Vagina (tissue), 2 donors: ENCODE measurements at regions of chr1 and their contacts with region 1.

Region 1: DNA sequence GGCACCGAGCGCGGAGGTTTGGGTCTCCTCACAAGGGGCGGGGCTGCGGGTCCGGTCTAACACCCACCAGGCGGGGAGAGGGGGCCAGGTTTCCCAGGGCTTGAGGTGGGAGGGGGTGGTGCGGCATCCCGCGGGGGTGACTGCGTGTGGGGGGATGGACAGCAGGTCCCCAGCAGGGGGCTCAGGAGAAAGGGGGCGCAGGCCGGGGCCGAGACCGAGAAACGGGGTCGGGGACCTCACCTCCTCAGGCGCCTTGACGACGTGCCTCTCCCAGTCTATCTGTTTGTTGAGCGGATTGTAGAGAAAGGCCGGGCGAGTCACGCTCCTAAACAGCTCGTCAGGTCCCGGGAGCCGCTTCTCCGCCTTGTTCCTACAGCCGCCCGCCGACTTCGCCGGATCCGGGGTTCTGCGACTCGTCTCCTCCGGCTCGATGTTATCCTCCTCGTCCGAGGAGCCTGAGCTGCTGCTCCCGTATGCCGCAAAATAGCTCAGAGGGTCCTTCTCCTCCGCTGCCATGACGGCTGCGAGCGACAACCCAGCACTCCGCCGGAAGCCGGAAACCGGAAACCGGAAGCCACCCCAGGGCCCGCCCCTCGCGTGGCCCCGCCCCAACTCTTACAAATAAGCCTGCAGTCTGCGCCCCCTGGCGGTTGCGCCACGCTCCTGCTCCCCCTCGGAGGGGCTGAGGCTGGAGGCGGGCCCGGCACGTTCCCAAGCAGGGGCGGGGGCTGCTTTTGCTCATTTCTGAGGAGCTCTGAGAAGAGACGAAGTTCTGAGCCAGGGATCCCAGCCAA is at the start of gene C1orf52:
- DNase-seq: no peak
- H3K4me3 ChIP-seq: peak within 1 kb of the TSS; percentile 83 to 97
- H3K27ac ChIP-seq: peak within 1 kb of the TSS; percentile 69
- H3K4me1 ChIP-seq: peaks cover 22% of the 10 kb centered on the region
- H3K27me3 ChIP-seq: no peaks in the 10 kb centered on the region
- CTCF ChIP-seq: peak; percentile 97 to 100 (median 98)
- POLR2A ChIP-seq: peak in 1 of 2 donors; percentile 57
- total RNA-seq, gene C1orf52: 13.0 TPM

Region 2: GRCh38 chr1:84506002-84506728 is 753.1 kb before region 1 on chr1 and contains the starts of genes GNG5 and SPATA1:
- intact Hi-C with region 1: loop called (anchors 10 kb)
- DNase-seq: peak; percentile 97
- H3K4me3 ChIP-seq: peak within 1 kb of the TSS; percentile 62 to 90
- H3K27ac ChIP-seq: peak within 1 kb of the TSS; percentile 95
- H3K4me1 ChIP-seq: peaks cover 37% of the 10 kb centered on the region
- H3K27me3 ChIP-seq: no peaks in the 10 kb centered on the region
- CTCF ChIP-seq: no peak
- POLR2A ChIP-seq: peak in 1 of 2 donors; percentile 63
- total RNA-seq, gene GNG5: 95.3 TPM
- total RNA-seq, gene SPATA1: 0.25 TPM

Region 3: DNA sequence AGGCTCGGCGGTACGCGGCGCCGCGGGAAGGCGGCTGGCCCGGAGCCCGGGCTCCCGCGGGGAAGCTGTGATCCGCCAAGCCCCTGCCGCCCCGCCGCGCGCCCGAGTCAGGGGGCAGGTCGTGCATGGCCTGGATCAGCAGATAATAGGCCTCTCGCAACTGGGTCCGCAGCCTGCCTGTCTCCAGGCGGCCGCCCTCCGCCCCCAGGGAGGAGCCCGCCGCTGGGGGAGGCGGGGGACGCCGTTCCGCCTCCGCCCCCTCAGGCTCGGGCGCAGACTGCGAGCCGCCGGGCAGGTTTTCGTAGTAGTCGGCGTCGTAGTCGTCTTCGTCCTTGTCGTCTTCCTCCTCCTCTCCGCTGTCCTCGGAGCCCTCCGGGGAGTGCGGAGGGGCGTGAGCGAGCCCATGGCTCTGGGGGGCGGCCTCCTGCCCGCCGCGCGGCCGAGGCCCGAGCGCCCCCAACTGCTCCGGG is 58.4 kb before region 1 on chr1 and contains the start of gene SYDE2:
- intact Hi-C with region 1: loop called (anchors 5 kb)
- DNase-seq: no peak
- H3K4me3 ChIP-seq: peak within 1 kb of the TSS; percentile 53 to 68
- H3K27ac ChIP-seq: peak within 1 kb of the TSS; percentile 92
- H3K4me1 ChIP-seq: peaks cover 52% of the 10 kb centered on the region
- H3K27me3 ChIP-seq: no peaks in the 10 kb centered on the region
- CTCF ChIP-seq: peak in 1 of 3 experiments; percentile 30
- POLR2A ChIP-seq: peak in 1 of 2 donors; percentile 60
- total RNA-seq, gene SYDE2: 4.7 TPM

Region 4: DNA sequence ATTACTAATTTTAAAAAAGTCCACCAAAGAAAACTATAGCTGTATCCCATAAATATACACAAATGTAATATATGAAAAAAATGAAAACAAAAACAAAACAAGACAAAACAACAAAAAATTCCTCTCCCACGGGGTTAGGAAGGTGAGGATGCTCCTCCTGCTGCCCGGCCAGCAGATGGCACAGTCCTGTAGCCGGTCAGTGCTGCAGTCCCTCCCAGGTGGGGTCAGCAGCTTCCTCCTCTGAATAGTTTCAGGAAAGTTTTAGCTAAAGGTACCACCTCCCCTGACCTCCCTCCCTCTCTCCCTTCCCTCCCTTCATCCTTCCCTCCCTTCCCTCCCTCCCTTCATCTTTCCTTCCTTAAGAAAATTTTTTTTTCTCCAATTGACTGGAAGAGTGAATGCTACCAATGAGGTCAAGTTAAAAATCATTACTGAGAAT is 85.0 kb after region 1 on chr1:
- intact Hi-C with region 1: no loop called
- DNase-seq: no peak
- H3K4me3 ChIP-seq: no peak overlapping the region
- H3K27ac ChIP-seq: no peak overlapping the region
- H3K4me1 ChIP-seq: peaks cover 12% of the 10 kb centered on the region
- H3K27me3 ChIP-seq: no peaks in the 10 kb centered on the region
- CTCF ChIP-seq: no peak
- POLR2A ChIP-seq: no peak